ENCODE measurements at regions of chr1 and their contacts with region 1.

Region 1: GRCh38 chr1:93615582-93616150 is 66.0 kb downstream of the BCAR3 start:
- DNase-seq: peak; percentile 70
- H3K4me3 ChIP-seq: no peak overlapping the region
- CTCF ChIP-seq: no peak

Region 2: DNA sequence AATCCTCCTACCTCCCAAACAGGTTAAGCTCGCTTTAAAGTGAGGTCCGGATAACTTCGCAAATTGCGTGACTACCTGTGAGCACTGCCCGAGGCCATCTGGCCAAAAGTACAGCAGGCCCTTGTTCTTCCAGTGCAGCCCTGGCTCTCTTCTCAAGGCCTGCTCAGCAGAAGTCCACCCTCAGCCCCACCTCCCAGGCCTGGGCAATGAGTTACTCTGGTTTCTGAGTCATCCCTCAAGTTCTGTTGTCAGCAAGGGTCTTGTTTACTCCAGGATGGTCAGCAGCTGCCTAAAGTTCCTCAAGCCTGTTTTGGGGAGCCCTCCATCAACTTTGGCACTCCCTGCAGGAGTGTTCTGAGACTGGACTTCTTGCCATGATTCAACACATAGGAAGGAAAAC is 35.8 kb before region 1 on chr1:
- in situ Hi-C with region 1: loop called (anchors 5 kb)
- DNase-seq: peak; percentile 83
- H3K4me3 ChIP-seq: no peak overlapping the region
- CTCF ChIP-seq: no peak

Region 3: GRCh38 chr1:93814059-93814794 is 198.6 kb after region 1 on chr1:
- in situ Hi-C with region 1: no loop called
- DNase-seq: peak; percentile 69
- H3K4me3 ChIP-seq: no peak overlapping the region
- CTCF ChIP-seq: peak; percentile 99